ENCODE measurements at regions of chr10 and their contacts with region 1.

Region 1: GRCh38 chr10:93554760-93555432 is 11.6 kb upstream of the FFAR4 start:
- DNase-seq: peak; percentile 72
- CTCF ChIP-seq: peak; percentile 72

Region 2: GRCh38 chr10:93482145-93482834 is 72.6 kb before region 1 on chr10 and contains the start of gene MYOF:
- CTCF ChIA-PET with region 1: no interaction called
- POLR2A ChIA-PET with region 1: no interaction called
- DNase-seq: peak; percentile 70
- CTCF ChIP-seq: peak; percentile 63

Region 3: DNA sequence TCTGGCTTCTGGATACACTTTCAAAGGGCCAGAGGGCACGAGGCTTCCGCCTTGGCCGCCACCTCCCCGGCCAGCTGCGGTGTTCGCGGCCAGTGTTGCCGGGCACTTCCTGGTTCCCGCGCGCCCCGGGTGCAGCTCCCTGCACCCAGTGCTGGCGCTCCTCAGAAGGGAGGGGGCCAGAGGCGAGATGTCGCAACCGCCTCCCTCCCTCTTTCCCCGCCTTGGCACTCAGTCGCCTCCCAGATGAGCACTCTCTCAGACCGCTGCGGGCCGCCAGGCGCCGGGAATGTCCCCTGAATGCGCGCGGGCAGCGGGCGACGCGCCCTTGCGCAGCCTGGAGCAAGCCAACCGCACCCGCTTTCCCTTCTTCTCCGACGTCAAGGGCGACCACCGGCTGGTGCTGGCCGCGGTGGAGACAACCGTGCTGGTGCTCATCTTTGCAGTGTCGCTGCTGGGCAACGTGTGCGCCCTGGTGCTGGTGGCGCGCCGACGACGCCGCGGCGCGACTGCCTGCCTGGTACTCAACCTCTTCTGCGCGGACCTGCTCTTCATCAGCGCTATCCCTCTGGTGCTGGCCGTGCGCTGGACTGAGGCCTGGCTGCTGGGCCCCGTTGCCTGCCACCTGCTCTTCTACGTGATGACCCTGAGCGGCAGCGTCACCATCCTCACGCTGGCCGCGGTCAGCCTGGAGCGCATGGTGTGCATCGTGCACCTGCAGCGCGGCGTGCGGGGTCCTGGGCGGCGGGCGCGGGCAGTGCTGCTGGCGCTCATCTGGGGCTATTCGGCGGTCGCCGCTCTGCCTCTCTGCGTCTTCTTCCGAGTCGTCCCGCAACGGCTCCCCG is 11.8 kb after region 1 on chr10 and contains the start of gene FFAR4:
- CTCF ChIA-PET with region 1: interaction called, 21 read pairs
- POLR2A ChIA-PET with region 1: no interaction called
- DNase-seq: no peak
- CTCF ChIP-seq: no peak

Region 4: DNA sequence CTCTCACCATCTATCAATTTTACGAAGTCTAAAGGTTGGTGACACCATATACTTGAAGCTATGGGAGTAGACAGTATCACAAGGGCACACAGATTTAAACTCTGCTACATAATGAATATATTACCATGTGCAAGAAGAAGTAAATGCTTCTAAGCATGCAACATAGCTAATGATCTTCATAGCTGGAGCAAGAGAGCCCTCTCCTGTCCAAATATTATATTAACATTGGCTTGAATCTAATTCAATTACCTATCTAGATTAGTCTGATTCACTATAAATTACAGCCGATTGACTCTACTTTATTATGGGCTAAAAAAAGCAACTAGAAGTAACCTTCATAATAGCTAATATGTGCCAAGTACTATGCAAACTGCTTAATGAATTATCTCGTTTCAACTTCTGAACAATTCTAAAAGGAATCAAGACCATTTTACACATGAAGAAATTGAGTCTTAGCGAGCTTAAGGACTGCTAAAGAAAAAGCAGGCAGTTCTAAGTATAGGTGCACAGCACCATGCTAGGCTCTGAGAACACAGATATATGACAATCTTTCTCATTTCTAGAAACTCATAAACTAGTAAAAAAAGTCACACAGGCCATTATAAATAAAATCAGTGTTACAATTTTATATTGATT is 125.6 kb after region 1 on chr10:
- CTCF ChIA-PET with region 1: interaction called, 92 read pairs
- POLR2A ChIA-PET with region 1: no interaction called
- DNase-seq: no peak
- CTCF ChIP-seq: peak; percentile 25

Region 5: GRCh38 chr10:93702211-93703001 is 147.5 kb after region 1 on chr10 and contains the start of gene FRA10AC1:
- CTCF ChIA-PET with region 1: interaction called, 10 read pairs
- POLR2A ChIA-PET with region 1: no interaction called
- DNase-seq: peak; percentile 78
- CTCF ChIP-seq: peak; percentile 35

Region 6: GRCh38 chr10:93816123-93816747 is 261.3 kb after region 1 on chr10:
- CTCF ChIA-PET with region 1: interaction called, 27 read pairs
- POLR2A ChIA-PET with region 1: no interaction called
- DNase-seq: peak; percentile 51
- CTCF ChIP-seq: peak; percentile 76

Region 7: GRCh38 chr10:93859049-93859655 is 304.3 kb after region 1 on chr10:
- CTCF ChIA-PET with region 1: interaction called, 20 read pairs
- POLR2A ChIA-PET with region 1: no interaction called
- DNase-seq: no peak
- CTCF ChIP-seq: peak; percentile 1